Activated naive CD4-positive, alpha-beta T cell treated with anti-CD3 and anti-CD28 coated beads, Interleukin-2, amount 10 ng/mL, durations not matched to agents 7 days and 5 days (primary cell): ENCODE measurements at regions of chr1 and their contacts with region 1.

Region 1: DNA sequence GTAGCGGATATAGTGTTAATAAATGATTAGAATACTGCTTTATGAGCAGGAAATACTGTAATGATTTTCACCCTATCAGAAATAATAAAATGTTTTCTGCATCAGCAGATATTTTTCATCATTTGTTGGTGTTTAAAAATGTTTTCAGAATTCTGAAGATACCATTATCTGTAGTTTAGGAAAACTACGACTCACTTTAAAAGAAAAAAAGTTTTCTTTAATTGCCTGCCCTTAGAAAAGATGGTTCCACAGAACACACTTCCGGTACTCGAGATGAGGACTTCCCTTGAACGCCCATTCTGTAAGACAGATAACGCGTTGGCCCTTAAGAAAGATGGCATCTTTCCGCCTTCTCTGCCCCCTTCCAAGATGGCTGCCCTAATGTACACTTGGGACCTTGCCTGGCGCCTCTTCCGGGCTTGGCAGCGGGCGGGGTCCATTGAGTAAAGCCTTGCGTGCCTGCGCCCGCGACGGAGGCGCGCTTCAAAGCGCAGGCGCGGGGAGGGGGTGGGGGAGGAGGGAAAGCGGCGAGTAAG is at the start of gene SZRD1:
- DNase-seq: peak; percentile 97
- H3K4me3 Mint-ChIP-seq: peak within 1 kb of the TSS; percentile 95
- H3K27ac Mint-ChIP-seq: peak within 1 kb of the TSS; percentile 99
- H3K4me1 Mint-ChIP-seq: peaks cover 44% of the 10 kb centered on the region
- H3K27me3 Mint-ChIP-seq: no peaks in the 10 kb centered on the region

Region 2: GRCh38 chr1:16055613-16056520 is 310.9 kb before region 1 on chr1:
- CTCF ChIA-PET with region 1: no interaction called
- DNase-seq: peak; percentile 92
- H3K4me3 Mint-ChIP-seq: no peak overlapping the region
- H3K27ac Mint-ChIP-seq: no peak overlapping the region
- H3K4me1 Mint-ChIP-seq: peaks cover 6% of the 10 kb centered on the region
- H3K27me3 Mint-ChIP-seq: peaks cover 22% of the 10 kb centered on the region

Region 3: DNA sequence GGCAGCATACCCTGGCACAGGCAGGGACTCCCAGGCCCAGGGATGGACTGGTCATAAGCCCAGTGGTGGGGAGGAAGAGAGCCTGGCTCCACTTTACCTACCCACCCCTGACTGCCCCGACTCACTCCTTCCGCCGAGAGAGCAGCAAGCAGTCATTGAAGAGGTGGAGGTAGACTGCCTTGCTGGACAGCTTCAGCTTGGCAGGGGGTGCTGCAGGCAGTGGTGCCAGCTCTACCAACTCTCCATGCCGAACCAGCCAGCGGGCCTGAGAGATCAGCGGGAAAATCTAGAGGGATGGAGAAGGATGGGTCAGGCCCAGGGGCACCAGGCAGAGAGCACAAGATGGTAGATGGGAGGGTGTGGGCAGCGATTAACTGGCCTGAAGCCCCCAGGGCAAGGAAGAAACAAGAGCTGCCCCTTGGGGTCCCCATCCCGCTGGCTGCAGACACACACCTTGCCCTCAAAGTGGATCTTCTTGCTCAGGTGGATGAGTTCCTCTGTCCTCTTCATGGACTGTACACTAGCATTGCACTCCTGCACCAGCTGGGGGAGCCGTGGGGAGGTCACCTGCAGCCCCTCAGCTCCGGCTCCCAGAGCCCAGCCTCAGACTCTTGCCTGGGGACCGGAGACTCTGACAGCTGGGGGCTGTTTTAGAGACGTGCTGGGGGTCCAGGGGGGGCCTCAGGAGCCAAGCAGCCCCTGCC is 162.0 kb before region 1 on chr1:
- CTCF ChIA-PET with region 1: interaction called, 16 read pairs
- DNase-seq: peak; percentile 63
- H3K4me3 Mint-ChIP-seq: peak overlapping the region; percentile 63
- H3K27ac Mint-ChIP-seq: no peak overlapping the region
- H3K4me1 Mint-ChIP-seq: peaks cover 19% of the 10 kb centered on the region
- H3K27me3 Mint-ChIP-seq: no peaks in the 10 kb centered on the region

Region 4: DNA sequence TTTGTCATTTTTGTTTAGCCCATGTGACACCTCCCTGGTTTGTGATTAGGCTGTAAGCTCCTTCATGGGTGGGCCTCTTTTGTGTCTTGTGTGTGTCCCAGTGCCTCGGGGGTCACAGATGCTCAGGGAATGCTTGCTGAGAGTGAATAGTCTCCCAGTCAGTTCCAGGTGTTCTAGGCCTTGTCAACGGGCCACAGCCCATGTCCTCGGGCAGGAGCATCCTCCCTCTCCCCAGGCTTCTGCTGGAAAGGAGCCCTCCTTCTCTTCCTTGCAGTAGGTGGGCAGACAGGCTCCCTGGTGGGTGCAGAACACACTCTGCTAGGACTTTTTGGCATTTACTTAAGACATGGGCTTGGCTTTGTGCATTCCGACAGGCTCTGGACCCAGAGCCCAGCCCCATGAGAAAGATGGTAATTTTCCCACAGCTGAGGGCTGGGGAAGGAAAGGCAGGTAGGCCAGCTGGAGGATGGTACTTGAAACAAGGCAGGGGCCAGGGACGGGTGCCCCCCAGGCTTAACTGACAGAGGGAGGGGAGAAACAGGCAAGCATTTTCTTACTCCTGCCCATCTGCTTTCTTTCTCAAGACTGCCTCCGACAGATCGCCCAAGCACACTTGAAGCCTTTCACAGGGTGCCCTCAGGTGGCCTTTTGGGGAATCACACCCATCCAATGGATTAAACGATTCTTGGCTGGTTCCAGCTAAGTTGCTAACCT is 122.7 kb before region 1 on chr1:
- CTCF ChIA-PET with region 1: interaction called, 24 read pairs
- DNase-seq: peak; percentile 86
- H3K4me3 Mint-ChIP-seq: no peak overlapping the region
- H3K27ac Mint-ChIP-seq: no peak overlapping the region
- H3K4me1 Mint-ChIP-seq: peaks cover 19% of the 10 kb centered on the region
- H3K27me3 Mint-ChIP-seq: no peaks in the 10 kb centered on the region

Region 5: GRCh38 chr1:16351994-16352841 is 14.6 kb before region 1 on chr1 and contains the start of gene FBXO42:
- CTCF ChIA-PET with region 1: interaction called, 42 read pairs
- DNase-seq: peak; percentile 93
- H3K4me3 Mint-ChIP-seq: peak within 1 kb of the TSS; percentile 97
- H3K27ac Mint-ChIP-seq: peak within 1 kb of the TSS; percentile 94
- H3K4me1 Mint-ChIP-seq: peaks cover 33% of the 10 kb centered on the region
- H3K27me3 Mint-ChIP-seq: no peaks in the 10 kb centered on the region

Region 6: DNA sequence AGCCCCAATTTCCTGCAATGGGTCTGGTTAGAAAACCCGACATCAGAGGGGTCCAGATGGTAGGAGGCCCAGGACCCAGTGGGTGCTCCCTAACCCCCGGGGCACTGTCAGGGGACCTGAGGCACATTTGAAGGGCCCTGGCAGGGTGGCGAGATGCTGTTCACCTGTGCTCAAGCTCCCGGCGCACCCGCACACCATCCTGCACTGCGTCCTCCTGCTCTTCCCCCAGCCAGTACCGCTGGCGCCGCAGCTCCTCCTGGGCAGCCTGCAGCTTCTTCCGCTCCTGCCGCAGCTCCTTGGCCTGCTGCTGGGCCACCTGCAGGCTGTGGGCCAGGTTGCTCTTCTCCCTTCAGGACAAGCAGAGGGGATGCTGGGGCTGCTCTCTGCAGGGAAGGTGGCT is 111.3 kb after region 1 on chr1:
- CTCF ChIA-PET with region 1: no interaction called
- DNase-seq: peak; percentile 9
- H3K4me3 Mint-ChIP-seq: no peak overlapping the region
- H3K27ac Mint-ChIP-seq: no peak overlapping the region
- H3K4me1 Mint-ChIP-seq: no peaks in the 10 kb centered on the region
- H3K27me3 Mint-ChIP-seq: no peaks in the 10 kb centered on the region